Activated naive CD4-positive, alpha-beta T cell treated with anti-CD3 and anti-CD28 coated beads, Interleukin-2, amount 10 ng/mL, durations not matched to agents 7 days and 5 days (primary cell): ENCODE measurements at regions of chr2 and their contacts with region 1.

Region 1: DNA sequence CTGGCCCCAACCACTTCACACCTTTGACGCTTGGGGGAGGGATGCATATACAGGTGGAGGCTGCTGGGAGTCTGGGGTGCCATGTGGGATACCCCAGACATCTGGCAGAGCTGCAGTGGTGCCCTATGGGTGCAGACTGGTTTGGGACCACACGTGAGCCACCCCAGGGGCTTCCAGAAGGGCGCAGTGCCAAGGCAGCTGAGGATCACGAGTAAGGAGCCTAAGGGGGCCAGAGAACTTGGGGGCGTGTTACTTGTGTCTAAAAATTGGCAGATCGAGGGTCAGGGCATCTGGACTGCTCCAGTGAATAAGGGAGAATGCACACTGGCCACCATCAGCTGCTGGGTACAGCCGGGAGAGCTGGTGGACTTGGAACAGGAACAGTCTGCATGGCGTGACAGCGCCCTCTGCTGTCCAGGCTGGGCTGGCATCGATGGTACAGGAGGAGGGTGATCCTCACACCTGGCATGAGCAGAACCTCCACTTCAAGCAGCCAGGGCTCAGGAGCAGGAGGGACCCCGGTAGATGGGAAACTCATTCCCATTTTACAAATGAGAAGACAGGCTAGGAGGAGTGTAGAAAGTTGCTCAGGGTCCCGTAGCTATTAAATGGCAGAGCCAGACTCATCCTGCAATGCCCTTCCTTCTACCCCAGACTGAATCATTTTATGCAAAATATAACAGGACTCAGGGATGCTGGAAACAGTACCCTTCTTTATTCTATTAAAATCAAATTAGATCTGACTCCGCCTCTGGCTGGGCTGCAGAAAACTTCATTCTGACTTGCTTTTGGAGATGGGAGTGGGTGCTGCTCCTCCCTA is 60.4 kb downstream of the ATOH8 start:
- DNase-seq: peak; percentile 92
- H3K4me3 Mint-ChIP-seq: no peak overlapping the region
- H3K27ac Mint-ChIP-seq: no peak overlapping the region
- H3K4me1 Mint-ChIP-seq: no peaks in the 10 kb centered on the region
- H3K27me3 Mint-ChIP-seq: peaks cover 51% of the 10 kb centered on the region

Region 2: GRCh38 chr2:85648619-85649018 is 165.6 kb before region 1 on chr2:
- CTCF ChIA-PET with region 1: interaction called, 10 read pairs
- DNase-seq: peak; percentile 48
- H3K4me3 Mint-ChIP-seq: no peak overlapping the region
- H3K27ac Mint-ChIP-seq: peak overlapping the region; percentile 2
- H3K4me1 Mint-ChIP-seq: no peaks in the 10 kb centered on the region
- H3K27me3 Mint-ChIP-seq: no peaks in the 10 kb centered on the region

Region 3: GRCh38 chr2:85695121-85695520 is 119.1 kb before region 1 on chr2:
- CTCF ChIA-PET with region 1: no interaction called
- DNase-seq: no peak
- H3K4me3 Mint-ChIP-seq: no peak overlapping the region
- H3K27ac Mint-ChIP-seq: no peak overlapping the region
- H3K4me1 Mint-ChIP-seq: peaks cover 7% of the 10 kb centered on the region
- H3K27me3 Mint-ChIP-seq: peaks cover 37% of the 10 kb centered on the region

Region 4: GRCh38 chr2:85707304-85707703 is 106.9 kb before region 1 on chr2:
- CTCF ChIA-PET with region 1: interaction called, 11 read pairs
- DNase-seq: peak; percentile 74
- H3K4me3 Mint-ChIP-seq: no peak overlapping the region
- H3K27ac Mint-ChIP-seq: peak overlapping the region; percentile 39
- H3K4me1 Mint-ChIP-seq: peaks cover 46% of the 10 kb centered on the region
- H3K27me3 Mint-ChIP-seq: peaks cover 41% of the 10 kb centered on the region

Region 5: GRCh38 chr2:85741833-85742455 is 72.2 kb before region 1 on chr2:
- CTCF ChIA-PET with region 1: interaction called, 14 read pairs
- DNase-seq: no peak
- H3K4me3 Mint-ChIP-seq: no peak overlapping the region
- H3K27ac Mint-ChIP-seq: no peak overlapping the region
- H3K4me1 Mint-ChIP-seq: no peaks in the 10 kb centered on the region
- H3K27me3 Mint-ChIP-seq: peaks cover 95% of the 10 kb centered on the region

Region 6: DNA sequence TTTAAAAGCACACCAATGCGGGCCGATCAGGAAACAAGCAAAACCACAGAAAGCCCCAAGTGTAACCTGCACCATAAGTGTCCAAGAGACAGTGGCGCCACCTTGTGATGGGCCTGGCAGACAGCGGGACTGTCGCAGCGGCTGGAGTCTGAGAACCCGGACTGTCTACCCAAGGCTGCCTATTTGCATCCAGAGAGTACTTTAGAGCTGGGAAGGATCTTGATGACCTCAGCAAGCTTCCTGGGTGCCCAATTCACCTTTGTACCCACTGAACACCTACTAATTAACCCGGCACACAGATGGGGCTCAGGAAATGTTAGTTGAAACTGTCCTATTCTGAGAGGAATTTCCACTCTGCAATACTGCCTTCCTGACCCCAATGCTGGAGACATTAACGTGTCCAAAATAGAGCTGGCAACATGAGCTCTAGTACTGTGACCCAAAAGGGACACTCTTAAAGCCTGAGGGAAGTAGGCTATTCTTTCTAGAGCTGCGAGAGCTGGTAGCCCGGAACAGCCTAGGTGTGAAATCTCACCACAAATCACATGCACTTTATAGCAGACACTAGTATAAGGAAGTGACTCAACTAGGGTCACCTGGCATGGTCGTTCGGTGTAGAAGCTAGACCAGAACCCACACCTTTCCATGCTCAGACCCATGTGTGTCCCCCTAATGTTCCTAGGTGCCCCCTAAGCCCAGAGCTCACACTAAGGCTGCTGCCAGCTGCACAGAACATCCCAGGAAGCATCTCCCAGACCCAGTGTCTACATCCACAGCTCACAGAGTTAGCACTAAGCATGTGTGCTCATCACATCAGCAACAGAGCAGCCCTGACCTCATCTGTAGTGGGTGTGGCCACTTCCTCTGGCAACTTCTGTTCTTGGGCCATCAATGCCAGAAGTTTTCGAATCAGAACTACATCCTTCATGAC is 266.1 kb after region 1 on chr2:
- CTCF ChIA-PET with region 1: interaction called, 16 read pairs
- DNase-seq: peak; percentile 92
- H3K4me3 Mint-ChIP-seq: no peak overlapping the region
- H3K27ac Mint-ChIP-seq: peak overlapping the region; percentile 81
- H3K4me1 Mint-ChIP-seq: peaks cover 45% of the 10 kb centered on the region
- H3K27me3 Mint-ChIP-seq: no peaks in the 10 kb centered on the region

Region 7: DNA sequence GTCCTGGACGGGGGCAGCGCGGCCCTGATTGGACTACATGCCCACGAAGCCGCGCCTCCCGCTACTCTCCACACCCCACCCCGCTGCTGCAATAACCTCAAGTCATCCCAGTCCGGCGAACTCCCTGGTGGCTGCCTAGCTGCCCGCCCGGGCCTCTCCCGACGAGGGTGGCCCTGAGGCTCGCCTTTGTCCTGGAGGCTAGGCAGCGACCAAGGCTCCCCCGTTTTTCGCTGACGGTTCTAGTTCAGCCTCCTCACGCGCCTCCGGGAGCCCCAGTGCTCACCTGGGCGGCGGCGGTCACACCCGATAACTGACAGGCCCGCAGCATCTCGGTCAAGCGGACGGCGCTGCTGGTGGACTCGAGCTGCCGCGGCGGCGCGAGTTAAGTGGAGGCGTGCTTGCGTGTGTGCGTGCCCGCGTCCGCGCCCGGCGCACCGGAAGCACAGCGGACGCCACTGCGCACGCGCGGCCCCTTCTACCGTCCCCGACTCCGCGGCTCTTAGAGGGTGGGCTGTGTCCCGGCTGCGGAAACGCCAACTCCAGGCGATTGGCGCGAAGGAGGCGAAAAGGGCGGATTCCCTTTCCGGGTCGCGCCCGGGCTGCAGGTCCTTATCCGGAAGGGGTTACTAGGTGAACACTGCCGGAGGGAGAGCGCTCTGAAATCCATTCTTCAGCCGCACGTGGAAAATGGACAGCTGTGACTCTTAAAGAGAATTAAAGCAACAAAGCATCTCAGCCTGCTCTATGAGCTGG is 381.0 kb after region 1 on chr2 and contains the start of gene IMMT:
- CTCF ChIA-PET with region 1: no interaction called
- DNase-seq: peak; percentile 96
- H3K4me3 Mint-ChIP-seq: peak within 1 kb of the TSS; percentile 96
- H3K27ac Mint-ChIP-seq: peak within 1 kb of the TSS; percentile 94
- H3K4me1 Mint-ChIP-seq: peaks cover 63% of the 10 kb centered on the region
- H3K27me3 Mint-ChIP-seq: no peaks in the 10 kb centered on the region